A673 (cell line): ENCODE measurements at regions of chr1 and their contacts with region 1.

Region 1: DNA sequence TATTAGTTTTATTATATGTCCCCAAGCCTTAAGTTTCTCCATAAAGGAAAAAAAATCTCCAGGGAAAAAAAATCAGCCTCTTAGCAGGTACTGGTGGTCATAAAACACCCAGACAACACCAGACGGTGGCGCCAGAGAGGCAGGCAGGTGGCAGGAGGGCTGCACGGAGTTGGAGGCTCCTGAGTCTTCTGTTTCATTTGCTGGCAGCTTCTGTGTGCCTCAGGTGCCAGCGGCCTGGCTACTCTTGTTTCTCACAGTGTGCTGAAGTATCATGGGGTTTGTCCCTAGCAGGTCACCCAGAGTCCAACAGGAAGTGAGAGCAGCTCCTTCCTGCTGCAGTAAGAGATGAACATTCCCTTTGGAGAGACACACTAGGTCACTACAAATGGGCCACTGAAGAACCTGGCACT is 123.3 kb upstream of the GADD45A start:
- DNase-seq: peak; percentile 84
- H3K4me3 ChIP-seq: no peak overlapping the region
- H3K27ac ChIP-seq: no peak overlapping the region
- H3K4me1 ChIP-seq: peaks cover 5% of the 10 kb centered on the region
- H3K27me3 ChIP-seq: no peaks in the 10 kb centered on the region
- CTCF ChIP-seq: peak; percentile 94

Region 2: GRCh38 chr1:67524143-67525052 is 37.3 kb before region 1 on chr1:
- CTCF ChIA-PET with region 1: no interaction called
- POLR2A ChIA-PET with region 1: no interaction called
- intact Hi-C with region 1: no loop called
- DNase-seq: peak; percentile 24
- H3K4me3 ChIP-seq: no peak overlapping the region
- H3K27ac ChIP-seq: no peak overlapping the region
- H3K4me1 ChIP-seq: no peaks in the 10 kb centered on the region
- H3K27me3 ChIP-seq: no peaks in the 10 kb centered on the region
- CTCF ChIP-seq: peak; percentile 53

Region 3: DNA sequence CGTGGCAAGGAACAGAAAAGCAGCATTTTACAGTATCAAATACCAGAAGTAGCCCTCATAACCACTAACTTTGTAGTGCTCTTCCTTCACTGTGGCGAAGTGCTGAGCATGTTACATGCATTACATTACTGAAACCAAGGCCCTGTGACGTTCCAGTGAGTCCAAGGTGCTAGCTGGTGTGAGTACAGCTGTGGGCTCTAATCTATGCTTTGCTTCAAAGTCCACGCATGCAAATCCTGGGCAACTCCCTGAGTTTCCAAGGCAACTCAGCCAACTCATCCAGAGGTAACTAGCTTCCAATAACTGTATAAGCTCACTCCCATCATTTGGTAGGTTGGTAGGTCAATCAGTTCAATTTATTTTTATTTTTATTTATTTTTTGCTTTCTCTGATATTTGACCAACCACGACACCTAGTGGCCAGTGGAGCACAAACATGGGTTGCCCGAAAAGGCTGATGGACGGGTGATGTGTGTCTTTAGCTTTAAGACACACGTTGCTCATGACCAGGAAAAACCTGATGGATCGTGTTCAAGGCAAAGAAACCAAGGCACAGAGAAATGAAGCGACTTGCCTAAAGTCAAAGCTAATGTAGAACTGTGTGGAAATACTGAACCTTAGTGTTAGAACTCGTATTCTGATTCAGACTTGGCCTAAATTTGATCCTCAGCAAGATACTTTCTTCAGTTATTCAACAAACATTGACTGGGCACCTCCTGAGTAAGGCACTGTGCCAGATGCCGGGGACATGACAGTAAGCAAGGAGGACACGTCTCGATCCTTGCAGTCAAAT is 198.5 kb after region 1 on chr1:
- CTCF ChIA-PET with region 1: interaction called, 16 read pairs
- POLR2A ChIA-PET with region 1: no interaction called
- intact Hi-C with region 1: loop called (anchors 1 kb)
- DNase-seq: peak; percentile 70
- H3K4me3 ChIP-seq: no peak overlapping the region
- H3K27ac ChIP-seq: no peak overlapping the region
- H3K4me1 ChIP-seq: no peaks in the 10 kb centered on the region
- H3K27me3 ChIP-seq: no peaks in the 10 kb centered on the region
- CTCF ChIP-seq: peak; percentile 92